Common myeloid progenitor, CD34-positive (primary cell): ENCODE measurements at regions of chr22 and their contacts with region 1.

Region 1: GRCh38 chr22:23385291-23386244 is 194.5 kb downstream of the IGLL1 start:
- DNase-seq: peak; percentile 78 to 88 (median 81)
- H3K4me3 ChIP-seq: no peak overlapping the region
- H3K27ac ChIP-seq: no peak overlapping the region
- H3K4me1 ChIP-seq: peaks cover 0 to 29% (median 22%) of the 10 kb centered on the region in 4 experiments
- H3K27me3 ChIP-seq: no peaks in the 10 kb centered on the region

Region 2: GRCh38 chr22:23322547-23322946 is 63.0 kb before region 1 on chr22:
- CTCF ChIA-PET with region 1: interaction called, 10 read pairs
- POLR2A ChIA-PET with region 1: no interaction called
- DNase-seq: peak in 2 of 3 donors; percentile 22 to 32
- H3K4me3 ChIP-seq: no peak overlapping the region
- H3K27ac ChIP-seq: no peak overlapping the region
- H3K4me1 ChIP-seq: no peaks in the 10 kb centered on the region
- H3K27me3 ChIP-seq: no peaks in the 10 kb centered on the region